Activated CD4-positive, alpha-beta memory T cell treated with anti-CD3 and anti-CD28 coated beads, Interleukin-2, amount 10 ng/mL, durations not matched to agents 7 days and 5 days (primary cell): ENCODE measurements at regions of chr6 and their contacts with region 1.

Region 1: GRCh38 chr6:130885392-130886192 is 58.4 kb downstream of the SMLR1 start:
- DNase-seq: peak; percentile 72
- H3K4me3 Mint-ChIP-seq: no peak overlapping the region
- H3K27ac Mint-ChIP-seq: no peak overlapping the region
- H3K4me1 Mint-ChIP-seq: no peaks in the 10 kb centered on the region
- H3K27me3 Mint-ChIP-seq: no peaks in the 10 kb centered on the region

Region 2: GRCh38 chr6:130769861-130770260 is 115.7 kb before region 1 on chr6:
- CTCF ChIA-PET with region 1: no interaction called
- POLR2A ChIA-PET with region 1: no interaction called
- DNase-seq: no peak
- H3K4me3 Mint-ChIP-seq: no peak overlapping the region
- H3K27ac Mint-ChIP-seq: no peak overlapping the region
- H3K4me1 Mint-ChIP-seq: no peaks in the 10 kb centered on the region
- H3K27me3 Mint-ChIP-seq: no peaks in the 10 kb centered on the region

Region 3: DNA sequence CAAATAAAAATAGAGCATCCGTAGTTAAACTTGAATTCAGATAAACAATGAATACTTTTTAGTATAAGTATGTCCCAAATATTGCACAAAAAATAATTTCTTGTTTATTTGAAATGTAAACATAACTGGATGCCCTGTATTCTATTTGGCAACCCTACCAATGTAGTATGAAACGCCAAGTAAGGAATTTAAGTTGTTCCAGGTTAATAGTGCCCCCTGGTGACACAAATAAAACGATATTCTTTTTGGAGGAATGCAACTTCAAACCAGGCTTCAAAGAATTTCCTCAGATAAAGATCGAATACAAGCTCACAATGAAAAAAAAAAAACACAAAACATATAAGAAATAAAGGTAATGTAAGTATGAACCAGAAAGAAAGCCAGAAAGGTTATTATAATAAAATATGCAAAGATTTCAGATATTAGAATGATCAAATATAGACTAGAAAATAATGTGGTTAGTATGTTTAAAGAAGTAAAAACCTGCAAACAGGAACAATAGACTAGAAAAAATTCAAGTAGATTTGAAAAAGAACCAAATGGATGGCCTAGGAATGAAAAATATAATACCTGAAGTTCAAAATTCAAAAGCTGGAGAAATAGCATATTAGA is 231.3 kb after region 1 on chr6:
- CTCF ChIA-PET with region 1: interaction called, 36 read pairs
- POLR2A ChIA-PET with region 1: no interaction called
- DNase-seq: no peak
- H3K4me3 Mint-ChIP-seq: no peak overlapping the region
- H3K27ac Mint-ChIP-seq: no peak overlapping the region
- H3K4me1 Mint-ChIP-seq: no peaks in the 10 kb centered on the region
- H3K27me3 Mint-ChIP-seq: peaks cover 1% of the 10 kb centered on the region

Region 4: GRCh38 chr6:131167773-131168172 is 282.2 kb after region 1 on chr6:
- CTCF ChIA-PET with region 1: interaction called, 10 read pairs
- POLR2A ChIA-PET with region 1: no interaction called
- DNase-seq: no peak
- H3K4me3 Mint-ChIP-seq: no peak overlapping the region
- H3K27ac Mint-ChIP-seq: no peak overlapping the region
- H3K4me1 Mint-ChIP-seq: no peaks in the 10 kb centered on the region
- H3K27me3 Mint-ChIP-seq: no peaks in the 10 kb centered on the region